ENCODE measurements at regions of chr17 and their contacts with region 1.

Region 1: GRCh38 chr17:8057691-8058114 is 18.8 kb downstream of the ALOX15B start:
- DNase-seq: peak; percentile 90
- H3K4me3 ChIP-seq: no peak overlapping the region
- H3K27ac ChIP-seq: no peak overlapping the region
- H3K4me1 ChIP-seq: peaks cover 27% of the 10 kb centered on the region
- CTCF ChIP-seq: peak; percentile 85

Region 2: GRCh38 chr17:8016632-8017478 is 40.8 kb before region 1 on chr17:
- CTCF ChIA-PET with region 1: no interaction called
- POLR2A ChIA-PET with region 1: interaction called, 3 read pairs
- intact Hi-C with region 1: loop called (anchors 2 kb)
- DNase-seq: peak; percentile 50
- H3K4me3 ChIP-seq: peak overlapping the region; percentile 27
- H3K27ac ChIP-seq: no peak overlapping the region
- H3K4me1 ChIP-seq: peaks cover 7% of the 10 kb centered on the region
- CTCF ChIP-seq: peak; percentile 82

Region 3: GRCh38 chr17:8079291-8080207 is 21.8 kb after region 1 on chr17:
- CTCF ChIA-PET with region 1: interaction called, 3 read pairs
- POLR2A ChIA-PET with region 1: no interaction called
- intact Hi-C with region 1: loop called (anchors 2 kb)
- DNase-seq: peak; percentile 90
- H3K4me3 ChIP-seq: peak overlapping the region; percentile 74
- H3K27ac ChIP-seq: peak overlapping the region; percentile 67
- H3K4me1 ChIP-seq: peaks cover 6% of the 10 kb centered on the region
- CTCF ChIP-seq: peak; percentile 84

Region 4: DNA sequence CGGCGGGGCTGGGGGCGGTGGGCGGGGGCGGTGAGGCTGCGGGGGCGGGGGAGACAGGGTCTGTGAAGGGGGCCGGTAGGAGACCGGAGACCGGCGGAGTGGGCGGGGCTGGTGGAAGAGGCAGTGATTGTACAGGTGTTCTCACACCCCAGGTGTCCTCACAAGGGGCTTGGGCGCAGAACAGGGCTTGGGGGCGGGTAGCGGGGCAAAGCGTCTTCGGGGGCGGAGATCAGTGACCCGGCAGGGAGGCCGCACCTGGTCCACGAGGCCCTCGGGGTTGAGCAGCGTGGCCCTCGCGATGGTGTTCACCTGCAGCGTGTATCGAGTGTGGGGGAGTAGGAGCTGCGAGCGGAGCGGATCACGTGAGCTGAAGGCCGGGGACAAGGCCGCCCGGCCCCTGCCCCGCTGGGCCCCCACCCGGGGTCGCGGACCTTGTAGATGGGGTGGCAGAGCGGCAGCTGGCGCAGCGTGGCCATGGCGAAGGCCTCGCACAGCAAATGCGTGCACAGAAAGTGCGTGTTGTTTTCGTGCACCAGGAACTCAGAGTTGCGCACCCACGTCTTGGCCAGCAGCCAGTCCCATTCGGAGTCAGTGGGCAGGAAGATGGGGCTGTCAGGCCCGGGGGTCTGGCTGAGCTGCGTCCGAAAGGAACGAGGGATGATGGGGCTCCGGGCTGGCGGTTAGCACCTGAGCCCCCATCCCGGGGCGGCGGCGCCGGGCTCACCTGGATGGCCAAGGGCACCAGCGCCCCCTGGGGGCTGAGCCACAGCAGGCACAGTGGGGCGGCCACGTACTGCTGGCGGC is 52.2 kb after region 1 on chr17:
- CTCF ChIA-PET with region 1: interaction called, 3 read pairs
- POLR2A ChIA-PET with region 1: interaction called, 3 read pairs
- intact Hi-C with region 1: loop called (anchors 1 kb)
- DNase-seq: peak; percentile 85
- H3K4me3 ChIP-seq: peak overlapping the region; percentile 63
- H3K27ac ChIP-seq: no peak overlapping the region
- H3K4me1 ChIP-seq: peaks cover 12% of the 10 kb centered on the region
- CTCF ChIP-seq: peak; percentile 88

Region 5: DNA sequence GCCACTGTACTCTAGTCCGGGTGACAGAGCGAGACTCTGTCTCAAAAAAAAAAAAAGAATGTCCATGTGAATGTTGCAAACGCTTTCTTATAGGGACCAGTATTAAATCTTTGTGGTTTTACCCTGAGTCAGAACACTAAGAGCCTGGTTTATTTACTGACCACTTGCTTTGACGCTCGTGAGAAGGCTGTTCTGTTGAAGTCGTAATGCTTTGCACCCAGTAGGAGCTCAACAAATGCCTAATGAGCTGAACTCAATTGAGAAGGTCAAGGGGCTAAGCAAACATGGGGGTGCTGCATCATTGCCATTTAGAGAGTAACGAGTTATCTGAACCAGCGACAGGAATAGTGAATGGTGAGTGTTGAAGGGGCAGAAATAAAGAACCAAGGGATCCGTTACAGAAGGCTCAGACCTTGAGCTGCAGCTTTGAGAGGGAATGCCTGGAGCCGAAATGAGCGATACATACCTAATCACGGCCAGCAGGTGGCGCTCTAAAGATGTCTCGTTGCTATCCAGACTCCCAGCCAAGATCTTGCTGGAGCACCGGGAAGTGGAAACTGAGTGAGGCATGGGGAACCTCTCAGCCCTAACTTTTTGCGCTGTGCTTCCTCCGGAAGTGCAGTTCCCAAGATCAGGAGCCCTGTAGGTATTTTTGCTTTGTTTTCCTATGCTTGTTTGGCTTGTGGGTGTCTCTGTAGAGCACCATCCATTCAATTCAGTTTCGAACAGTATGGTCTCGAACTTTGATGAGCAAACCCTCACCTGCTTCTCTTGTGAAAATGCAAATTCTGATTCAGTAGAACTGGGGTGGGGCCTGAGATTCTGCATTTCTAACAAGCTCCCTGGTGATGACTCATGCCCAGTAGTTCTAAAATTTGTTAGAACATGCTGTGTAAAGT is 352.5 kb after region 1 on chr17:
- CTCF ChIA-PET with region 1: no interaction called
- POLR2A ChIA-PET with region 1: no interaction called
- intact Hi-C with region 1: no loop called
- DNase-seq: peak; percentile 82
- H3K4me3 ChIP-seq: no peak overlapping the region
- H3K27ac ChIP-seq: no peak overlapping the region
- H3K4me1 ChIP-seq: no peaks in the 10 kb centered on the region
- CTCF ChIP-seq: peak; percentile 96

Measured in OCI-LY7 (cell line).